Psoas muscle (tissue), 8 donors: ENCODE measurements at regions of chrX and their contacts with region 1.

Region 1: DNA sequence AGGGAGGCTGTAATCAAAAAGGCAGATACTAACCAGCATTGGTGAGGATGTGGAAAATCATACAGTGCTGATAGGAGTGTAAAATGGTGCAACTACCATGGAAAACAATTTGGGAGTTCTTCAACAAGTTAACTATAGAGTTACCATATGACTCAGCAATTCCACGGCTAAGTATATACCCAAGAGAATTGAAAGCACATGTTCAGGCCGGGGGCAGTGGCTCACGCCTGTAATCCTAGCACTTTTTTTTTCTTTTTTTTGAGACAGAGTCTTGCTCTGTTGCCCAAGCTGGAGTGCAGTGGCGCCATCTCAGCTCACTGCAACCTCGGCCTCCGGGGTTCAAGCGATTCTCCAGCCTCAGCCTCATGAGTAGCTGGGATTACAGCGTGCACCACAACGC is 15.0 kb upstream of the CD99L2 start:
- DNase-seq: no peak
- ATAC-seq: no peak
- H3K4me3 ChIP-seq: no peak overlapping the region
- H3K27ac ChIP-seq: no peak overlapping the region
- H3K4me1 ChIP-seq: no peaks in the 10 kb centered on the region
- H3K27me3 ChIP-seq: no peaks in the 10 kb centered on the region
- CTCF ChIP-seq: no peak

Region 2: GRCh38 chrX:150762258-150763165 is 151.0 kb before region 1 on chrX:
- intact Hi-C with region 1: no loop called
- DNase-seq: no peak
- ATAC-seq: peak in 3 of 4 donors; percentile 8 to 42 (median 33)
- H3K4me3 ChIP-seq: no peak overlapping the region
- H3K27ac ChIP-seq: no peak overlapping the region
- H3K4me1 ChIP-seq: no peaks in the 10 kb centered on the region
- H3K27me3 ChIP-seq: no peaks in the 10 kb centered on the region
- CTCF ChIP-seq: no peak

Region 3: GRCh38 chrX:150942998-150943585 is 29.6 kb after region 1 on chrX:
- intact Hi-C with region 1: loop called in 1 of 2 experiments (anchors 1 kb)
- DNase-seq: no peak
- ATAC-seq: no peak
- H3K4me3 ChIP-seq: no peak overlapping the region
- H3K27ac ChIP-seq: no peak overlapping the region
- H3K4me1 ChIP-seq: no peaks in the 10 kb centered on the region
- H3K27me3 ChIP-seq: no peaks in the 10 kb centered on the region
- CTCF ChIP-seq: no peak